ENCODE measurements at regions of chr13 and their contacts with region 1.

Region 1: DNA sequence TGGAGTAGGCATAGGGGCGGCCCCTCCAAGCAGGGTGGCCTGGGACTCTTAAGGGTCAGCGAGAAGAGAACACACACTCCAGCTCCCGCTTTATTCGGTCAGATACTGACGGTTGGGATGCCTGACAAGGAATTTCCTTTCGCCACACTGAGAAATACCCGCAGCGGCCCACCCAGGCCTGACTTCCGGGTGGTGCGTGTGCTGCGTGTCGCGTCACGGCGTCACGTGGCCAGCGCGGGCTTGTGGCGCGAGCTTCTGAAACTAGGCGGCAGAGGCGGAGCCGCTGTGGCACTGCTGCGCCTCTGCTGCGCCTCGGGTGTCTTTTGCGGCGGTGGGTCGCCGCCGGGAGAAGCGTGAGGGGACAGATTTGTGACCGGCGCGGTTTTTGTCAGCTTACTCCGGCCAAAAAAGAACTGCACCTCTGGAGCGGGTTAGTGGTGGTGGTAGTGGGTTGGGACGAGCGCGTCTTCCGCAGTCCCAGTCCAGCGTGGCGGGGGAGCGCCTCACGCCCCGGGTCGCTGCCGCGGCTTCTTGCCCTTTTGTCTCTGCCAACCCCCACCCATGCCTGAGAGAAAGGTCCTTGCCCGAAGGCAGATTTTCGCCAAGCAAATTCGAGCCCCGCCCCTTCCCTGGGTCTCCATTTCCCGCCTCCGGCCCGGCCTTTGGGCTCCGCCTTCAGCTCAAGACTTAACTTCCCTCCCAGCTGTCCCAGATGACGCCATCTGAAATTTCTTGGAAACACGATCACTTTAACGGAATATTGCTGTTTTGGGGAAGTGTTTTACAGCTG is at the starts of genes BRCA2 and ZAR1L:
- DNase-seq: peak; percentile 89 to 92
- H3K4me3 ChIP-seq: peak within 1 kb of the TSS; percentile 74 to 89
- H3K27ac ChIP-seq: peak within 1 kb of the TSS; percentile 95 to 98
- H3K4me1 ChIP-seq: peaks cover 0 to 13% (median 3%) of the 10 kb centered on the region in 4 donors
- H3K27me3 ChIP-seq: no peaks in the 10 kb centered on the region
- CTCF ChIP-seq: no peak

Region 2: DNA sequence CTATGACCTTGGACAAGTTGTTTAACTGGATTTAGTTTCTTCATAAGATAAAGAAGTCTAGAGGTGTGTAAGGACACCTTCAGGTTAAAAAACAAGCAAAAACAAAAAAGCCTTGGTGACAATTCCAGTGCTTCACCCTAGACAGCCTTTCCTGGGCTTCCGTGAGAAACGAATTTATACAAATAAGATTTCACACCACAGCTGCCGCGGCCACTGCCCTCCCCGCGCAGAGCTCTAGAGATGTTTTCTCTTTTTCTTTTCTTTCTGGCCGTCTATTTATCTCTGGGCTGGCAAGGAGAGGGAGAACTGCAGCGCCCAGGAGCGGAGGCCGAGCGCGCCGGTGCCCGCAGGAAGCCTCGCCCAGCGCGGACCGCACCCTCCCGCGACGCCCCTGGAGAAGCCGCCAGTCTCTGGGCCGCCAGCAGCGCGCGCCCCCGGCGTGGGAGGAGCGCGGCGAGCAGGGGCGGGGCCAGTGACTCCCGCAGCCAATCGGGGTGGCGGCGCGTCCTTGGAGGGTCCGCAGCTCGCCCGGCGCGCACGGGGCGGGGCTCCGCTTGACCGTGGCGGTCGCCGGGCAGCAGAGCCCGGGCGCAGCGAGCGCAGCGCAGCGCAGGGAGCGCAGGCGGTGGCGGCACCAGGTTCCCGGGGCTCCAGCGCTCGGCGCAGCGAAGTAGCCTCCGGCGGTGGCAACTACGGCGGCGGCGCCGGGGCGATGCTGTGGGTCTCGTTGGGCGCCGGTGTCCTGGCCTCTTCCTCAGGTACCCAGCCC is 469.1 kb before region 1 on chr13:
- intact Hi-C with region 1: loop called (anchors 10 kb)
- DNase-seq: peak; percentile 87 to 95
- H3K4me3 ChIP-seq: peak overlapping the region; percentile 96 to 98
- H3K27ac ChIP-seq: peak overlapping the region; percentile 95 to 96
- H3K4me1 ChIP-seq: peaks cover 0 to 31% (median 13%) of the 10 kb centered on the region in 4 donors
- H3K27me3 ChIP-seq: no peaks in the 10 kb centered on the region
- CTCF ChIP-seq: no peak

Region 3: DNA sequence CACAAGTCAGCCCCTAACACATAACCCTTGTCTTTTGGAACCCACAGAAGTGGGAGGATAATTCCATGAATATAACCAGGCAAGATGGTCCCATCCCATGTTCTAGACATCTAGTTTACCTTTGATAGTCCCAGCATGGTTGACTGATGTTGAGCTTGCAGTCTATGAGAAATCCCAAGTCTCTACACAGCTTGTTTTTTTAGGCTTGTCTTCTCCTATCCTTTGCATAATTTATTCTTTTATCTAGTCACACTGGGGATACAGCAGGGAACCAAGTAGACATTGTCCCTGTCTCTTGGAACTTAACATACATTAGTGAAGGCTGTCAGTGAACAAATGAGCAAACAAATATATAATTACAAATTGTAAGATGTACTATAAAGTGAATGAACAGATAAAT is 303.5 kb before region 1 on chr13:
- intact Hi-C with region 1: loop called (anchors 2 kb)
- DNase-seq: no peak
- H3K4me3 ChIP-seq: no peak overlapping the region
- H3K27ac ChIP-seq: no peak overlapping the region
- H3K4me1 ChIP-seq: peaks cover 0 to 30% (median 7%) of the 10 kb centered on the region in 4 donors
- H3K27me3 ChIP-seq: no peaks in the 10 kb centered on the region
- CTCF ChIP-seq: no peak

Region 4: GRCh38 chr13:32752997-32753606 is 437.7 kb after region 1 on chr13:
- intact Hi-C with region 1: no loop called
- DNase-seq: no peak
- H3K4me3 ChIP-seq: no peak overlapping the region
- H3K27ac ChIP-seq: no peak overlapping the region
- H3K4me1 ChIP-seq: no peaks in the 10 kb centered on the region
- H3K27me3 ChIP-seq: no peaks in the 10 kb centered on the region
- CTCF ChIP-seq: no peak

Region 5: GRCh38 chr13:32911506-32911905 is 596.1 kb after region 1 on chr13:
- intact Hi-C with region 1: no loop called
- DNase-seq: no peak
- H3K4me3 ChIP-seq: no peak overlapping the region
- H3K27ac ChIP-seq: no peak overlapping the region
- H3K4me1 ChIP-seq: peaks cover 0 to 5% (median 1%) of the 10 kb centered on the region in 4 donors
- H3K27me3 ChIP-seq: no peaks in the 10 kb centered on the region
- CTCF ChIP-seq: peak in 1 of 2 experiments; percentile 7

Measured in tibial artery (tissue), 4 donors.